Activated naive CD4-positive, alpha-beta T cell treated with anti-CD3 and anti-CD28 coated beads for 36 hours (primary cell): ENCODE measurements at regions of chr3 and their contacts with region 1.

Region 1: DNA sequence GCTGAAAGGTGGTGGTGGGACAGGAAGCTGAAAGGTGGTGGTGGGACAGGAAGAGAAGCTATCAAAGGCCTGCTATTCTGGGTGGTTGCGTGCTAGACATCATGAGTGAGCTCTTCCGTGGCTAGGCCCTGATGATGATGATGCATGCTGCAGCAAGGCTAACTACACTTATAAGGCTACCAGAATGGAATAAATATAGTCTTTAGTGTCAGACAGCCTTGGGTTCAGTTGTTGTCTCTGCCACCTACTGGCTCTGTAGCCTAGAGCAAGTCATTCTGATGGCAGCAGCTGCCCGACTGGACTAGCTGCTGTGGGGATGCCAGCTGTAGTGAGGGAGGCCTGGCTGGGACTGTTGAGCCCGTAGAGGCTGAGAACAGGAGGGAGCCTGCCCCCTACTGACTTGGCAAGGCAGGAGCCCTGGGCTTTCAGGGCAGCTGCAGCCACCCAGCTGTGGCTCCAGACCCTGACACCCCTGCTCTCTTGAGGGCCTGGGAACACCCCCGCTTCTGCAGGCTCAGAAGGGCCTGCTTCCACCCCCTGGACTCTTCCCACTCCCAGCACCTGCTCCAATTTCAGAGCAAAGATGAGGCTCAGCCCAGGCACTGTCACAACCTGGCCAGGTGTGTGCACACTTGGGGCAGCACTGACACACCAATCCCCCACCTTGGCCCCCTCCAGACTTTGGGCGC is 21.4 kb upstream of the ZBED2 start:
- DNase-seq: peak; percentile 83
- H3K4me3 Mint-ChIP-seq: no peak overlapping the region
- H3K27ac Mint-ChIP-seq: peak overlapping the region; percentile 97
- H3K4me1 Mint-ChIP-seq: peaks cover 79% of the 10 kb centered on the region
- H3K27me3 Mint-ChIP-seq: no peaks in the 10 kb centered on the region

Region 2: GRCh38 chr3:111071257-111072015 is 545.1 kb before region 1 on chr3 and contains the start of gene NECTIN3:
- CTCF ChIA-PET with region 1: no interaction called
- intact Hi-C with region 1: loop called (anchors 2 kb)
- DNase-seq: peak; percentile 91
- H3K4me3 Mint-ChIP-seq: peak within 1 kb of the TSS; percentile 85
- H3K27ac Mint-ChIP-seq: peak within 1 kb of the TSS; percentile 27
- H3K4me1 Mint-ChIP-seq: peaks cover 24% of the 10 kb centered on the region
- H3K27me3 Mint-ChIP-seq: peaks cover 40% of the 10 kb centered on the region
- total RNA-seq, gene NECTIN3: 3.0 to 3.5 TPM

Region 3: GRCh38 chr3:111311709-111312235 is 304.8 kb before region 1 on chr3:
- CTCF ChIA-PET with region 1: no interaction called
- intact Hi-C with region 1: loop called (anchors 5 kb)
- DNase-seq: no peak
- H3K4me3 Mint-ChIP-seq: no peak overlapping the region
- H3K27ac Mint-ChIP-seq: peak overlapping the region; percentile 37
- H3K4me1 Mint-ChIP-seq: peaks cover 33% of the 10 kb centered on the region
- H3K27me3 Mint-ChIP-seq: no peaks in the 10 kb centered on the region

Region 4: DNA sequence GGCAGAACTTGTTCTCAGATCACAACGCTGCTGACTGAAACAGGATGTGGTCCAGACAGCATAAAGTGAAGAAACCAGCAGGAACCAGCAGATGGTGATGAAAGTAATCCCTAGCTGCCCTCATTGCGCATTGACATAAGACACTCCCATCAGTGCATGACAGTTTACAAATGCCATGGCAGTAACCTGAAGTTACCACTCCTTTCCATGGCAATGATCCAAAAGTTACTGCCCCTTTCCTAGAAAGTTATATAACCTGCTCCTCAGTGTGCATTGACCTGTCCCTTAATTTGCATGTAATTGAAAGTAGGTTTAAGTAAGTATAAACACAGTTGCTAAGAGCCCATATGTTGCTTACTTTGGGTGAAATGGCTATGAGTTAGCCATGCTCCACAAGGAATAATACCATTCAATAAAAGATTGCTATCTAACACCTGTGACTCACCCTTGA is 223.6 kb before region 1 on chr3:
- CTCF ChIA-PET with region 1: no interaction called
- intact Hi-C with region 1: loop called (anchors 2 kb)
- DNase-seq: peak; percentile 57
- H3K4me3 Mint-ChIP-seq: no peak overlapping the region
- H3K27ac Mint-ChIP-seq: no peak overlapping the region
- H3K4me1 Mint-ChIP-seq: peaks cover 20% of the 10 kb centered on the region
- H3K27me3 Mint-ChIP-seq: no peaks in the 10 kb centered on the region

Region 5: GRCh38 chr3:111577794-111578685 is 38.5 kb before region 1 on chr3:
- CTCF ChIA-PET with region 1: interaction called, 97 read pairs
- intact Hi-C with region 1: loop called (anchors 1 kb)
- DNase-seq: peak; percentile 38
- H3K4me3 Mint-ChIP-seq: peak overlapping the region; percentile 18
- H3K27ac Mint-ChIP-seq: peak overlapping the region; percentile 90
- H3K4me1 Mint-ChIP-seq: peaks cover 75% of the 10 kb centered on the region
- H3K27me3 Mint-ChIP-seq: no peaks in the 10 kb centered on the region

Region 6: GRCh38 chr3:111594205-111594604 is 22.4 kb before region 1 on chr3:
- CTCF ChIA-PET with region 1: interaction called, 88 read pairs
- intact Hi-C with region 1: loop called (anchors 1 kb)
- DNase-seq: no peak
- H3K4me3 Mint-ChIP-seq: peak overlapping the region; percentile 94
- H3K27ac Mint-ChIP-seq: peak overlapping the region; percentile 98
- H3K4me1 Mint-ChIP-seq: peaks cover 52% of the 10 kb centered on the region
- H3K27me3 Mint-ChIP-seq: no peaks in the 10 kb centered on the region

Region 7: GRCh38 chr3:111653766-111654165 is 37.2 kb after region 1 on chr3:
- CTCF ChIA-PET with region 1: no interaction called
- intact Hi-C with region 1: no loop called
- DNase-seq: no peak
- H3K4me3 Mint-ChIP-seq: no peak overlapping the region
- H3K27ac Mint-ChIP-seq: no peak overlapping the region
- H3K4me1 Mint-ChIP-seq: peaks cover 3% of the 10 kb centered on the region
- H3K27me3 Mint-ChIP-seq: no peaks in the 10 kb centered on the region